Heart right ventricle (tissue), 16 donors: ENCODE measurements at regions of chr11 and their contacts with region 1.

Region 1: DNA sequence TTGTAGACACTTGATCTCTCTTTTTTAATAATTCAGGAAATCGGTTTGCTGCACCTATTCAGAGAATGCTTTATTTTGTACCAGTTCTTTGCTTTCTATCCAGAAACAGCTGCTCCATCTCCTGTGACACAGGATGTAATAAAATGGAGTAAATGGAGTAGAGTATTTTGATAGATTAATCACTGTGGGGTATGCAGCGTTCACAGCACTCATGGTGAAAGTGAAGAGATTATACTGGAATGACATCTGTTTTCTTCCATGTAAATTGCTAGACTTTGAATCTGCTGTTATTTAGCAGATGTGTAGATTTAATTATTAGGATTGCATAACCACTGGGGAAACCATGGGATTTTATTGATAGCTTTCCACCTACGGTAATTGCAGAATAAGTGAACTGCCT is 227.3 kb upstream of the ARHGAP42 start:
- DNase-seq: no peak
- ATAC-seq: no peak
- H3K4me3 ChIP-seq: no peak overlapping the region
- H3K27ac ChIP-seq: no peak overlapping the region
- H3K4me1 ChIP-seq: no peaks in the 10 kb centered on the region
- H3K27me3 ChIP-seq: no peaks in the 10 kb centered on the region
- CTCF ChIP-seq: no peak

Region 2: DNA sequence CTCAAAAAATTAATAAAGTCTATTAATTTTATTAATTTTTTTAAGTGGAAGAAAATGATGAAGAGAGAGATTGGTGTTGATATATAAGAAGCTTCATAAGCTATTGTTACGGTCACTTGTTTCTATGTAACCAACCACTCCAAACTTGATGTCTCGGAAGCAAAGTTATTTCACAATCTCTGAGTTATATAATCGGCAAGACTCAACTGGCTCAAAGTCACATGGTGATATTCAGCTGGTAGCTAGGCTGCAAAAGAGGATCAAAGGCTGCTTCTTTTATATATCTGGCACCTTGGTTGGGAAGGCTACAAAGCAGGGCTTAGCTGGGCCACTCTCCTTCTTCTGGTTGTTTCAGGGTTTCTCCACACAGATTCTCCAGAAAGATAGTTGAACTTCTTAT is 17.8 kb before region 1 on chr11:
- intact Hi-C with region 1: loop called in 1 of 10 experiments (anchors 2 kb)
- DNase-seq: no peak
- ATAC-seq: no peak
- H3K4me3 ChIP-seq: no peak overlapping the region
- H3K27ac ChIP-seq: no peak overlapping the region
- H3K4me1 ChIP-seq: peaks cover 0 to 27% (median 6%) of the 10 kb centered on the region in 9 donors
- H3K27me3 ChIP-seq: no peaks in the 10 kb centered on the region
- CTCF ChIP-seq: no peak